Mammary epithelial cell (primary cell): ENCODE measurements at regions of chr18 and their contacts with region 1.

Region 1: DNA sequence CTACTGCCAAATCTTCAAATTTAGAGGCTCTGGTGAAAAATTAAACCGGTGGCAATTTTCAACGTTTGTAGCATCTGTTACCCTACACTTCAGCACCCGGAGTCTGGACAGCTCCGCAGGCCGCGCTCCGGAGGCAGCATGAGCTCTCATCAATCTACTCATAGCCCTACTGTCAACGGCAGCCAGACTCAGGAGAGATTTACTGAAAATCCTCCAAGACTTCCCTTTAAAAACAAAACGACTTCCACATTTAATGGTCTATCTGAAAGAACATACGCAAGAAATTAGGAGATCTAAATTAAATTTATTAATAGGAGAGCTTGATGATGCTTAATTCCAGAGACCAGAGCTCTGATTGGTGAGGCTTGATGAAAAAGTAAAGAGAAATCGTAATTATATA is 970 bp upstream of the ADCYAP1 start:
- DNase-seq: peak; percentile 33
- H3K4me3 ChIP-seq: no peak overlapping the region
- H3K27ac ChIP-seq: no peak overlapping the region
- H3K4me1 ChIP-seq: peaks cover 8% of the 10 kb centered on the region
- H3K27me3 ChIP-seq: peaks cover 47% of the 10 kb centered on the region
- CTCF ChIP-seq: no peak

Region 2: DNA sequence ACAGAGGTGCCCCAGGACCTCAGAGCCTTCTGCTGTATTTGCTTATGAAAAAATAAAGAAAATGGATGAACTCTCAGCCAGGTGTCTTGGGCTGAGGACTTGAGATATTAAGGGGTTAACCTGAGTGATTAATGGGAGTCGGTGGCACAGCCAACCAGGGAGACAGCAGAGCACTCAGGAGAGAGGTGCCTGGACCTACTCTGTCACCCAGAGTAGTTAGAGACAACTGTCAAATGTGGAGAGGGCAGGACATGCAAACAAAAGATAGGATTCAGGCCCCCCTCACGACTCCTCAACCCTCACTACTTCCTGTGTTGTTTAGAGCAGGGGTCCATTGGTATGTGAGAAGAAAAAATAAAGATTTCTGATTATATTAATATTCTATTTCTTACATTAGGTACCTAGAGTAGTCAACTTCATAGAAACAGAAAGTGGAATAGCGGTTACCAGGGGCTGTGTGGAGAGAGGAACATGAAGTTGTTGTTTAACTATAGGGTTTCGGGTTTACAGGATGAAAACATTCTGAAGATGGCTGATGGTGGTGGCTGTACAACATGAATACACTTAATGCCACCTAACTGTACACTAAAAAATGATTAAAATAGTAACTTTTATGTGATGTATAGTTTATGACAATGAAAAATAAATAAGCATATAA is 352.2 kb before region 1 on chr18:
- CTCF ChIA-PET with region 1: no interaction called
- dilution Hi-C with region 1: no loop called
- in situ Hi-C with region 1: no loop called
- intact Hi-C with region 1: no loop called
- DNase-seq: no peak
- H3K4me3 ChIP-seq: no peak overlapping the region
- H3K27ac ChIP-seq: no peak overlapping the region
- H3K4me1 ChIP-seq: no peaks in the 10 kb centered on the region
- H3K27me3 ChIP-seq: no peaks in the 10 kb centered on the region
- CTCF ChIP-seq: no peak

Region 3: DNA sequence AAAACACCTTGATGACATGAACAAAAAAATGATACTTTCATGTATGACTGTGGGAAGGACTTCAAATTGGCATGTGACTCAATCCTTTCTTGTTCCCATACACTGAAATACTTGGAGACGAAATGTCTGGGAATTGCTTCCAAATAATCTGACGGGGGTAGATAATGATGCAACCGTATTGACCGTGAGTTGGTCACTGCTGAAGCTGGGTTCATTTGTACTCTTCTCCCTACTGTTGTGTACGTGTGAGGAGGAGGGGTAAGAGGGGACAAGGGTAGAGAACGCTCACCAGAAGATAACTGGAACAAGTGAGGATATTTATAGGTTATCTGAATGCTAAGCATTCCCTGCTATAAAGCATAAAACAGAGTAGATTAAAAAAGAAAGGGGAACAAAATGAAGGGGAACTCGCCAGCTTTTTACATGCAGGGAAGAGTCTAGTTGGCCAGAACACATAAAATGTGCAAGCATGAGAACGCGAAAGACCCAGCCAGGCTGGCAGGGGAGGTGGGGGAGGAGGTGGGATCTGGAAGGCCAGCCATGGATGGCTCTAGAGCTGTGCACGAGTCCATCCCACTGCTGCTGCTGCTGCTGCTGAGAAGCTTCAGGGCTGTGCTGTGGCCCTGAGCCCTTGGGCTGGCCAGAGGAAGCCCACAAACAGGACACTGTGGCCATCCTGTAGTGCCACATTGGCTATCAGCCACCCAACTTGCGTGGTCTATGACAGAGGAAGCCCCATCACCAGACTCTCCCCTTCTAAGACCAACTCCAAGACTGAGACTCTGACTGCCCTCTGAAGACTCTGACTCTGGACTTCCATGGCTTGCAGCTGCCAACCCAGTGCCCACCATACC is 338.8 kb before region 1 on chr18:
- CTCF ChIA-PET with region 1: no interaction called
- dilution Hi-C with region 1: no loop called
- in situ Hi-C with region 1: no loop called
- intact Hi-C with region 1: no loop called
- DNase-seq: no peak
- H3K4me3 ChIP-seq: no peak overlapping the region
- H3K27ac ChIP-seq: no peak overlapping the region
- H3K4me1 ChIP-seq: no peaks in the 10 kb centered on the region
- H3K27me3 ChIP-seq: no peaks in the 10 kb centered on the region
- CTCF ChIP-seq: no peak

Region 4: DNA sequence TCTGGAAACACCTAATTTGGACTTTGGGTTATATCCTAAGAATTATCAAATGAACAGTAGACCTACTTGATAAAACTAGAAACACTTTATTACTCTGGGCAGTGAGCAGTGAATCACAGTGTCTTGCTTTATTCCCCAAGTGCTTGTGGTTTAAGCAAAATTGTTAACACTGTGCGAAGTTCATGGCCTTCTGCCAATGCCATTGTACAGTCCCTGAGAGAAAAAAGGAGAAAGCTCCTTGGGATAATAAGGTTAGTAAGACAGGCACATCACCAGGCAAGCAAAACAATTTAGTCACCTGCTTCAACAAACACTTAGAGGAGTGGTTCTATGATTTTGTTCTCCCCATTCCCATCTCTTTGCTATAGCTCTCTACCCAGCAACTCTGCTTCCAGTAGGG is 40.7 kb after region 1 on chr18:
- CTCF ChIA-PET with region 1: no interaction called
- dilution Hi-C with region 1: no loop called
- in situ Hi-C with region 1: no loop called
- intact Hi-C with region 1: loop called (anchors 5 kb)
- DNase-seq: peak; percentile 84
- H3K4me3 ChIP-seq: no peak overlapping the region
- H3K27ac ChIP-seq: no peak overlapping the region
- H3K4me1 ChIP-seq: no peaks in the 10 kb centered on the region
- H3K27me3 ChIP-seq: no peaks in the 10 kb centered on the region
- CTCF ChIP-seq: no peak

Region 5: GRCh38 chr18:961644-962355 is 58.1 kb after region 1 on chr18:
- CTCF ChIA-PET with region 1: no interaction called
- dilution Hi-C with region 1: no loop called
- in situ Hi-C with region 1: no loop called
- intact Hi-C with region 1: loop called (anchors 1 kb)
- DNase-seq: no peak
- H3K4me3 ChIP-seq: peak overlapping the region in 1 of 3 experiments; percentile 18
- H3K27ac ChIP-seq: no peak overlapping the region
- H3K4me1 ChIP-seq: no peaks in the 10 kb centered on the region
- H3K27me3 ChIP-seq: no peaks in the 10 kb centered on the region
- CTCF ChIP-seq: peak; percentile 83 to 92

Region 6: DNA sequence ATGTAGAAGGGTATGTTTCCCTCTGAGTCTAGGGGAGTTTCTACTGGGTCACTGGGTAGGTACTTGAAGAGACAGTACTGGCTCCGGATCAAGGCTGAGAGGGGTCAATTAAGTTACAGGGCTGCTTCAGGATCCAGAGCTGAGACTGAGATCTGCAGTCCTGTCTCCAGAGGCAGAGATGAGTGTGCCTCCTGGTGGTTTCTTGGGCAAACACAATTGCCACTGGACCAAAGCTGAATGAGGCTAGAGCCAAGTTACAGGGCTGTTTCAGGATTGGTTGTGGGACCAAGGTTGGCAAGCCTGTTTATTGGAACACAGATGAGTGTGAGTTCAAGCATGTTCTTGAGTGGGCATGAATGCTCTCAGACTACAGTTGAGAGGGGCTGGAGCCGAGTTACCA is 158.9 kb after region 1 on chr18:
- CTCF ChIA-PET with region 1: no interaction called
- dilution Hi-C with region 1: no loop called
- in situ Hi-C with region 1: no loop called
- intact Hi-C with region 1: loop called (anchors 10 kb)
- DNase-seq: no peak
- H3K4me3 ChIP-seq: no peak overlapping the region
- H3K27ac ChIP-seq: no peak overlapping the region
- H3K4me1 ChIP-seq: no peaks in the 10 kb centered on the region
- H3K27me3 ChIP-seq: no peaks in the 10 kb centered on the region
- CTCF ChIP-seq: no peak